Dendritic cell treated with granulocyte-macrophage colony-stimulating factor and Interleukin-4, amounts not matched to agents 40 ng/mL and 50 ng/mL, for 4 days (primary cell): ENCODE measurements at regions of chr19 and their contacts with region 1.

Region 1: GRCh38 chr19:13104360-13104847 is 1.7 kb upstream of the LYL1 start:
- H3K4me3 Mint-ChIP-seq: peak overlapping the region; percentile 88
- H3K27ac Mint-ChIP-seq: peak overlapping the region; percentile 98
- H3K4me1 Mint-ChIP-seq: peaks cover 54% of the 10 kb centered on the region
- H3K27me3 Mint-ChIP-seq: no peaks in the 10 kb centered on the region

Region 2: GRCh38 chr19:13093407-13094105 is 10.8 kb before region 1 on chr19:
- intact Hi-C with region 1: loop called (anchors 1 kb)
- H3K4me3 Mint-ChIP-seq: peak overlapping the region; percentile 92
- H3K27ac Mint-ChIP-seq: peak overlapping the region; percentile 98
- H3K4me1 Mint-ChIP-seq: peaks cover 43% of the 10 kb centered on the region
- H3K27me3 Mint-ChIP-seq: peaks cover 5% of the 10 kb centered on the region

Region 3: DNA sequence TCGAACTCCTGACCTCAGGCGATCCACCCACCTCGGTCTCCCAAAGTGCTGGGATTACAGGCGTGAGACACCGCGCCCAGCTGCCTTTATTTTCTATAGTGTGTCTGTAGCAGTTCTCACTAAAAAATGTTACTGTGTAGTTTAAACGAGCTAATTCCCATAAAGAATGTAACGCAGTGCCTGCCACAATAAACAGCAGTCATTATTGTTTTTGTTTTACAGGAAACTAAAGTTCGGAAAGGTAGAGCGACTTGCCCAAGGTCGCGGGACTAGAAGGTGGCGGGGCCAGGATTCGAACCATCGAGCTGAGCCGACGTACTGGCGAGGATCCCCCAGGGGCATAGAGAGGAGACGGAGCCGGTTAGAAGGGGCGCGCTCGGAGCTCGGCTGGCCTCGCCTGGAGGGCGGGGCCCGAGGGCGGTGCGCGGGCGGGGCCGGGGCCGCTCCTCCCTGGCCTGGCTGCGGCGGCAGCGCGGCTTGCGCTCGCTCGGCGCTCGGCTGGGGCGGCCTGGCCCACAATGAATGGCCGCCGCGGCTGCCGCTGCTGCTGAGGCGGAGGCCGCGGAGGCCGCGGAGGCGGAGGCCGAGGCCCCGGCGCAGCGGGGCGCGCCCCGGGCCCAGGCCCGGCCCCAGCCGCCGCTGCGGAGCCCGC is 13.5 kb after region 1 on chr19 and contains the start of gene NACC1:
- intact Hi-C with region 1: loop called (anchors 1 kb)
- H3K4me3 Mint-ChIP-seq: peak within 1 kb of the TSS; percentile 89
- H3K27ac Mint-ChIP-seq: peak within 1 kb of the TSS; percentile 83
- H3K4me1 Mint-ChIP-seq: peaks cover 68% of the 10 kb centered on the region
- H3K27me3 Mint-ChIP-seq: no peaks in the 10 kb centered on the region

Region 4: GRCh38 chr19:13150187-13150930 is 46.0 kb after region 1 on chr19 and contains the starts of genes IER2 and STX10:
- intact Hi-C with region 1: loop called (anchors 5 kb)
- H3K4me3 Mint-ChIP-seq: peak within 1 kb of the TSS; percentile 97
- H3K27ac Mint-ChIP-seq: peak within 1 kb of the TSS; percentile 99
- H3K4me1 Mint-ChIP-seq: peaks cover 48% of the 10 kb centered on the region
- H3K27me3 Mint-ChIP-seq: no peaks in the 10 kb centered on the region

Region 5: GRCh38 chr19:13334801-13335481 is 230.5 kb after region 1 on chr19:
- intact Hi-C with region 1: no loop called
- H3K4me3 Mint-ChIP-seq: no peak overlapping the region
- H3K27ac Mint-ChIP-seq: no peak overlapping the region
- H3K4me1 Mint-ChIP-seq: no peaks in the 10 kb centered on the region
- H3K27me3 Mint-ChIP-seq: peaks cover 1% of the 10 kb centered on the region